ENCODE measurements at regions of chr11 and their contacts with region 1.

Region 1: DNA sequence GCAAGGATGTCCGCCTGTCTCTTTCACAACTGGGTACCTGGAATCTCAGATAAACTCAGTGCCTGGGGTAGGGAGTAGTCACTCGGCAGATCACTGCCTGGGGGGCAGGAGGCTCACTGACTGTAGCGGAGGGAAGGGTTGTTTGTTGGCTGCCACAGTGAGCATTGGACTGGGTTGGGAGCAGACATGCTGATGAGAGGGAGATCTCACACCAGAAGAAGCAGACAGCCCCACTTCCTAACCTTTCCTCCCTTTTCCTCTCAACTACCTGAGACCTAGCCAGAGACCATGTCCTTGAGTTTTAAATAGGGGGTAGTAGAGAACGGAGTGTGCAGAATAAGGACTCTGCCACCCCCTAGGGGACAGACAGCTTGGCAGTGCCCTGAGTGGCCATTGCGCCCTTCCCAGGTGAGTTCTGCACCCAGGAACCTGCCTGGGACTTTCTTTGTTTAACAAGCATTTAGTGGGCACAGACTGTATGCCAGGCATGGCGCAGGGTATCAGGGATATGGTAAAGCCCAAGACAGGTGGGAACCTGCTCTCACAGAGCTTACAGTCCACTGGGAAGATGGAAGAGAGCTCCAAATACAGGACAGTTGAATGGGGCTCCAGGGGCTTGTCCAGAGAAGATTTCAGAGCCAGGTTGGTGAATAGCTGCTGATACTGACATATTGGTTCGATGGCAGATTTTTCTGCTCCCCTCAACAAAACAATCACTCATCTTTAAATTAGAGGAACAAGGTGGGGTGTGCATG is 115.7 kb upstream of the NNMT start:
- DNase-seq: peak; percentile 45
- ATAC-seq: peak; percentile 47

Region 2: GRCh38 chr11:113628912-113629311 is 551.6 kb before region 1 on chr11:
- intact Hi-C with region 1: no loop called
- DNase-seq: no peak
- ATAC-seq: no peak

Region 3: GRCh38 chr11:114060392-114061350 is 119.8 kb before region 1 on chr11:
- intact Hi-C with region 1: loop called (anchors 5 kb)
- DNase-seq: peak; percentile 69
- ATAC-seq: peak; percentile 11

Region 4: GRCh38 chr11:114132944-114133394 is 47.5 kb before region 1 on chr11:
- intact Hi-C with region 1: no loop called
- DNase-seq: peak; percentile 64
- ATAC-seq: no peak

Region 5: GRCh38 chr11:114159802-114160632 is 20.5 kb before region 1 on chr11:
- intact Hi-C with region 1: loop called (anchors 1 kb)
- DNase-seq: peak; percentile 100
- ATAC-seq: peak; percentile 72

Region 6: GRCh38 chr11:114280696-114281095 is 100.2 kb after region 1 on chr11:
- intact Hi-C with region 1: no loop called
- DNase-seq: peak; percentile 71
- ATAC-seq: peak; percentile 70